Activated T-helper 1 cell treated with anti-CD3 and anti-CD28 coated beads, Interleukin-12 subunit alpha, Interleukin-12 subunit beta, Interleukin-2, Interleukin-4 antibody, amounts not matched to agents 30 ng/mL and 10 ng/mL and 1 ng/mL, durations not matched to agents 14 hours and 24 hours and 36 hours (primary cell): ENCODE measurements at regions of chr1 and their contacts with region 1.

Region 1: GRCh38 chr1:224513787-224514209 is 79.2 kb upstream of the WDR26 start:
- DNase-seq: peak; percentile 71
- H3K4me3 Mint-ChIP-seq: no peak overlapping the region
- H3K27ac Mint-ChIP-seq: no peak overlapping the region
- H3K4me1 Mint-ChIP-seq: peaks cover 31% of the 10 kb centered on the region
- H3K27me3 Mint-ChIP-seq: no peaks in the 10 kb centered on the region

Region 2: GRCh38 chr1:224623743-224624333 is 110.0 kb after region 1 on chr1:
- intact Hi-C with region 1: loop called (anchors 5 kb)
- DNase-seq: peak; percentile 83
- H3K4me3 Mint-ChIP-seq: peak overlapping the region; percentile 70
- H3K27ac Mint-ChIP-seq: peak overlapping the region; percentile 94
- H3K4me1 Mint-ChIP-seq: peaks cover 48% of the 10 kb centered on the region
- H3K27me3 Mint-ChIP-seq: peaks cover 39% of the 10 kb centered on the region

Region 3: DNA sequence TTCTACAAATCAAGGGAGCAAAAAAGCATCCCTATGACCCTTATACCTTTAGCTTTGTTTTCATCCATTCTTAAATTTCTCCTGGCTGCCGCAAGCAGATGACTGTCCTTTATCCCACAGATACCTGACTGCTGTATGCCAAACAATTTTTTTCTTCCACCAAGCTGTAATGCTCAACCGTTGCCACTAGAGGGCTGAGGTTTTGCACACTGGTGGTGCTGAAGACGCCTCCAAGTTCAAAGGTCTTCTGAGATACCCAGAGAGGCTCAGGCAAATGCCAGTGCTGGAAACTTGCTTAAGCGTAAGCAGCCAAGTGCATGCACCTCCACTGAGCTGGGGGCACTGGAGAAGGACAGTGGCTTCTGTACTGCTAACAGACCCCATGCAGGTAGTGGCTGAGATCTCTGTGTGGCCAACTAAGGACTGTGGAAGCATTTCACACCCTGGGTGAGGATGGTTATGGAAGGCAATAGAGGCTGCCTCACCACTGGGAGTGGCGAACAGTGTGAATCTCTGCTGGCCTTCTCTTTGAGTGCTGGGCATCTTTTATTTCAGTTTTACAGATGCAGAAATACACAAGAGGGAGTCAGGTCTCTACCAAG is 130.9 kb after region 1 on chr1:
- intact Hi-C with region 1: loop called (anchors 1 kb)
- DNase-seq: peak; percentile 48
- H3K4me3 Mint-ChIP-seq: no peak overlapping the region
- H3K27ac Mint-ChIP-seq: no peak overlapping the region
- H3K4me1 Mint-ChIP-seq: no peaks in the 10 kb centered on the region
- H3K27me3 Mint-ChIP-seq: peaks cover 7% of the 10 kb centered on the region

Region 4: GRCh38 chr1:224851210-224851847 is 337.5 kb after region 1 on chr1:
- intact Hi-C with region 1: loop called (anchors 1 kb)
- DNase-seq: peak; percentile 34
- H3K4me3 Mint-ChIP-seq: no peak overlapping the region
- H3K27ac Mint-ChIP-seq: no peak overlapping the region
- H3K4me1 Mint-ChIP-seq: no peaks in the 10 kb centered on the region
- H3K27me3 Mint-ChIP-seq: peaks cover 10% of the 10 kb centered on the region

Region 5: GRCh38 chr1:224922404-224923164 is 408.8 kb after region 1 on chr1:
- intact Hi-C with region 1: loop called (anchors 1 kb)
- DNase-seq: no peak
- H3K4me3 Mint-ChIP-seq: no peak overlapping the region
- H3K27ac Mint-ChIP-seq: no peak overlapping the region
- H3K4me1 Mint-ChIP-seq: no peaks in the 10 kb centered on the region
- H3K27me3 Mint-ChIP-seq: peaks cover 4% of the 10 kb centered on the region